HCT116 (cell line): ENCODE measurements at regions of chr4 and their contacts with region 1.

Region 1: GRCh38 chr4:90293320-90293719 is 166.1 kb downstream of the CCSER1 start:
- DNase-seq: no peak
- ATAC-seq: no peak
- H3K4me3 ChIP-seq: no peak overlapping the region
- H3K27ac ChIP-seq: no peak overlapping the region
- H3K4me1 ChIP-seq: no peaks in the 10 kb centered on the region
- H3K27me3 ChIP-seq: no peaks in the 10 kb centered on the region
- CTCF ChIP-seq: peak in 2 of 3 experiments; percentile 39 to 61; a peak in 4 of 6 replicates
- POLR2A ChIP-seq: no peak
- RAD21 ChIP-seq: peak; percentile 63

Region 2: DNA sequence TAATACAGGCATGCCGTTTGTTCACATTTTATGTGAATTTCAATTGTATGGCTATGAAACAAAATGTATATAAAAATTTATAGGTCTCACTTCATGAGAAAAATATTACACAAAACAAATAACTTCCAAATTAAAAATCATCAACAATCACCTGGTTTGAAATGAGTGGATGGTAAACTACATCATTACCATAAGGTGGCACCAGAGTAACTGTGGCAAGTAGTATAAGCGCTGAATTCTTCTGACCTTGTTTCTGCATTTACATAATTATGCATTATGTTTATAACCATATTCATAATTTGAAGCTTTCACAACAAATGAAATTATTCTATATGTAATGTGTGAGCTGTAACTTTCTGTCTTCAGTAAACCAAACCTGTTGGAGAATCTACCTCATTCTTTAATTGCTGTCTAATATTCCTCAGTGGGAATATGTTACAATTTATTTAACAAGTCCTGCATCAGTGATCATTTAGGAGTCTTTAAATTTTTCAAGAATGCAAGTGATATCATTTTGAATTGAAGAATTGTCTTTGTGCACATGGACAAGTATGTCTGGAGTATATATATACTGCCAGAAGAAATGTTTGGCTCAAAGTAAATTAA is 343.4 kb before region 1 on chr4:
- CTCF ChIA-PET with region 1: interaction called, 4 read pairs
- POLR2A ChIA-PET with region 1: no interaction called
- RAD21 ChIA-PET with region 1: no interaction called
- intact Hi-C with region 1: loop called (anchors 2 kb)
- DNase-seq: no peak
- ATAC-seq: peak; percentile 64; the same call in 1 of the 2 replicates
- H3K4me3 ChIP-seq: no peak overlapping the region
- H3K27ac ChIP-seq: no peak overlapping the region
- H3K4me1 ChIP-seq: no peaks in the 10 kb centered on the region
- H3K27me3 ChIP-seq: no peaks in the 10 kb centered on the region
- CTCF ChIP-seq: peak; percentile 32 to 67 (median 50); a peak in 5 of 6 replicates
- POLR2A ChIP-seq: no peak
- RAD21 ChIP-seq: peak; percentile 64

Region 3: GRCh38 chr4:90025248-90025647 is 268.1 kb before region 1 on chr4:
- CTCF ChIA-PET with region 1: interaction called, 12 read pairs
- POLR2A ChIA-PET with region 1: no interaction called
- RAD21 ChIA-PET with region 1: no interaction called
- intact Hi-C with region 1: loop called (anchors 1 kb)
- DNase-seq: peak; percentile 13
- ATAC-seq: no peak
- H3K4me3 ChIP-seq: no peak overlapping the region
- H3K27ac ChIP-seq: no peak overlapping the region
- H3K4me1 ChIP-seq: no peaks in the 10 kb centered on the region
- H3K27me3 ChIP-seq: no peaks in the 10 kb centered on the region
- CTCF ChIP-seq: peak; percentile 27 to 58 (median 34); a peak in 4 of 6 replicates
- POLR2A ChIP-seq: no peak
- RAD21 ChIP-seq: peak; percentile 56

Region 4: GRCh38 chr4:90030954-90031353 is 262.4 kb before region 1 on chr4:
- CTCF ChIA-PET with region 1: interaction called, 12 read pairs
- POLR2A ChIA-PET with region 1: no interaction called
- RAD21 ChIA-PET with region 1: no interaction called
- intact Hi-C with region 1: no loop called
- DNase-seq: peak; percentile 23
- ATAC-seq: peak; percentile 93
- H3K4me3 ChIP-seq: no peak overlapping the region
- H3K27ac ChIP-seq: no peak overlapping the region
- H3K4me1 ChIP-seq: no peaks in the 10 kb centered on the region
- H3K27me3 ChIP-seq: no peaks in the 10 kb centered on the region
- CTCF ChIP-seq: peak; percentile 13 to 50 (median 47); a peak in 4 of 6 replicates
- POLR2A ChIP-seq: no peak
- RAD21 ChIP-seq: peak; percentile 46; the same call in 1 of the 2 replicates

Region 5: DNA sequence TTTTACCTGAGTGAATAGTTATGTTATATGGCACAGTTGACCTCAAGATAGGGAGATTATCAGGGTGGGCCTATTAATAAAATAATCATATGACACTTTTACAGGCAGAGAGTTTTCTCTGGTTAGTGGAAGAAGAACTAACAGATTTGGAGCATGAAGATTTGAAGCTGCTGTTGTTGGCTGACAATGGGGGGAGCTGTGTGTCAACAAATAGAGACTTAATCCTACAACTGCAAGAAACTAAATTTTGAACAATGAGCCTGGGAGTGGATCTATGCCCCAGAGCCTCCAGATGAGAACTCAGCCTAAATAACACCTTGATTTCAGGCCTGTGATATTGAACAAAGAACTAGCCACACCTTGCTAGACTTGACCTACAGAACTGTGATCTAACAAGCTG is 173.3 kb before region 1 on chr4:
- CTCF ChIA-PET with region 1: interaction called, 9 read pairs
- POLR2A ChIA-PET with region 1: no interaction called
- RAD21 ChIA-PET with region 1: no interaction called
- intact Hi-C with region 1: loop called (anchors 1 kb)
- DNase-seq: no peak
- ATAC-seq: peak; percentile 55; the same call in 1 of the 2 replicates
- H3K4me3 ChIP-seq: no peak overlapping the region
- H3K27ac ChIP-seq: no peak overlapping the region
- H3K4me1 ChIP-seq: peaks cover 0 to 8% of the 10 kb centered on the region in 2 experiments; a peak in 2 of 4 replicates
- H3K27me3 ChIP-seq: no peaks in the 10 kb centered on the region
- CTCF ChIP-seq: peak in 2 of 3 experiments; percentile 35 to 40; a peak in 3 of 6 replicates
- POLR2A ChIP-seq: no peak
- RAD21 ChIP-seq: peak; percentile 64